Left colon (tissue), 2 donors: ENCODE measurements at regions of chr10 and their contacts with region 1.

Region 1: GRCh38 chr10:116385994-116386809 is 41.4 kb upstream of the PNLIPRP3 start:
- DNase-seq: no peak
- ATAC-seq: no peak

Region 2: DNA sequence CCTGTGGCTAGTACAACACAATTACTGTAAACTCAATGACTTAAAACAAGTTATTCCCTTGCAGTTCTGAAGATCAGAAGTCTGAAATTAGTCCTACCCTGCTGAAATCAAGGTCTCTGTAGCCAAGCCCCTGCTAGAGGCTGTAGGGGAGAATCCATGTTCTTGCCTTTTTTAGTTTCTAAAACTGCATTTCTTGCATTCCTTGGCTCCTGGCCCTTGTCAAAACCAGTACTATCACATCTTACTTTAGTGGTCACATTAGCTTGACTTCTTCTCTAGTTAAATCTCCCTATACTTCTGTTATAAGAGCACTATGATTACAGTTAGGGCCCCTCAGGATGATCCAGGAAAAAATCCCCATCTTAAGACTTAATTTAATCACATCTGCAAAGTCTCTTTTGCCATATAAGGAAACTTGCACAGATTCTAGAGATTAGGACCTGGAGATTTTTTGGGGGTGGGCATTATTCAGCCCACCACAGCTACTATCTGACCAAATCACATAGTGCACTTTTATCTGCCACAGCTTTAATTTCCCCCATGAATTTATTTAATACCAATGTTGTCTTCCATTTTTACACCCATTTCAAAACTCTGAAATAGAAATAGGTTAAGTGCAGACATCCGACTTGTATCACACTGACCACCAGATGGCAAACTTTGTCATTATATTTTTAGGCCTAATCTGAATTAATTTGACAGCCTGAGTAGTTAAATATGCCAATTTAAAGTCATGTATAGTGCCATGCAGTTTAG is 680.0 kb before region 1 on chr10:
- intact Hi-C with region 1: loop called in 1 of 2 experiments (anchors 10 kb)
- DNase-seq: no peak
- ATAC-seq: no peak

Region 3: GRCh38 chr10:115795964-115796363 is 590.2 kb before region 1 on chr10:
- intact Hi-C with region 1: loop called in 1 of 2 experiments (anchors 5 kb)
- DNase-seq: no peak
- ATAC-seq: no peak

Region 4: GRCh38 chr10:116490028-116490662 is 103.9 kb after region 1 on chr10:
- intact Hi-C with region 1: no loop called
- DNase-seq: no peak
- ATAC-seq: no peak